Caco-2 (cell line): ENCODE measurements at regions of chr2 and their contacts with region 1.

Region 1: DNA sequence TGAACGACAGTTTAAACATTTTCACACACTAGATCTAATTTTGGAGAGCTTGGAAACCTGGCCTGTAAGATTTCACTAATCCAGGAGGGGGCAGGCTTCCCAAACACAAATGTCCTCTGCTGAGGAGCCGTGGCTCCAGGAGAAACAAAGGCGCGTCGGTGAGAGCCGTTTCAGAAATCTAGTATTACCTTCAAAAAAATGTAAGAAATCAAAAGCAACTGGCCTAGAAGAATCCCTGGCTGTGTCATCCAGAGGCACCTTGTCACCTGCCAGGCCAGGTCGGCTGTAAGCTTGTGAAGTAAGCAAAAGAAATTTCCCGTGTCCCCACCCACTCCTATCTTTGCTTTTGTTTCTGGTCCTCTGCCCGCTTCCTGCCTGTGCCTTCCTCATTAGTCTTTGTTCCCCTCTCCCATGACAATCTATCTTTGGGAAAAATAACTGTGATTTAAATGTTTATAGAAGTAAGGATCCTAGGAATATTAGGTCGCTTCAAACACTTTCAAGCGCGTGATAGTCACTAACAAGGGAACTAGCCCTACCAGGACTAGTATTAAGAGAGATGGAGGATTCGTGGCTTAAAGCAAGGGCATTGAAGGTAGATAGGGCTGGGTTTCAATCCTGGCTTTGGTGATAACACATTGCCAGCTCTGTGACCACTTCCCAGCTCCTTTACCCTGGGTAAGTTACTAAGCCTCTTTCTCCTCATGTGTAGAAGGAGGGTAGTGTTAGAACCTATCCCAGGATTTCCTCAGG is 99.5 kb upstream of the STK39 start:
- DNase-seq: peak; percentile 60 to 77
- H3K4me3 ChIP-seq: peak overlapping the region; percentile 38
- H3K4me3 Mint-ChIP-seq: peak overlapping the region; percentile 83
- H3K27ac Mint-ChIP-seq: peak overlapping the region; percentile 56
- H3K4me1 ChIP-seq: no peaks in the 10 kb centered on the region; the same call in 1 of the 2 replicates
- H3K4me1 Mint-ChIP-seq: peaks cover 10% of the 10 kb centered on the region
- H3K27me3 ChIP-seq: no peaks in the 10 kb centered on the region
- H3K27me3 Mint-ChIP-seq: no peaks in the 10 kb centered on the region
- CTCF ChIP-seq: peak; percentile 79 to 82

Region 2: GRCh38 chr2:168130346-168130745 is 216.6 kb before region 1 on chr2:
- CTCF ChIA-PET with region 1: no interaction called
- POLR2A ChIA-PET with region 1: no interaction called
- intact Hi-C with region 1: no loop called
- DNase-seq: no peak
- H3K4me3 ChIP-seq: no peak overlapping the region
- H3K4me3 Mint-ChIP-seq: no peak overlapping the region
- H3K27ac Mint-ChIP-seq: no peak overlapping the region
- H3K4me1 ChIP-seq: no peaks in the 10 kb centered on the region
- H3K4me1 Mint-ChIP-seq: no peaks in the 10 kb centered on the region
- H3K27me3 ChIP-seq: no peaks in the 10 kb centered on the region
- H3K27me3 Mint-ChIP-seq: peaks cover 5% of the 10 kb centered on the region
- CTCF ChIP-seq: no peak

Region 3: GRCh38 chr2:168194784-168195522 is 151.9 kb before region 1 on chr2:
- CTCF ChIA-PET with region 1: no interaction called
- POLR2A ChIA-PET with region 1: no interaction called
- intact Hi-C with region 1: no loop called
- DNase-seq: no peak
- H3K4me3 ChIP-seq: no peak overlapping the region
- H3K4me3 Mint-ChIP-seq: no peak overlapping the region
- H3K27ac Mint-ChIP-seq: no peak overlapping the region
- H3K4me1 ChIP-seq: peaks cover 31% of the 10 kb centered on the region
- H3K4me1 Mint-ChIP-seq: peaks cover 47% of the 10 kb centered on the region
- H3K27me3 ChIP-seq: no peaks in the 10 kb centered on the region
- H3K27me3 Mint-ChIP-seq: no peaks in the 10 kb centered on the region
- CTCF ChIP-seq: no peak

Region 4: GRCh38 chr2:168439536-168439935 is 92.6 kb after region 1 on chr2:
- CTCF ChIA-PET with region 1: no interaction called
- POLR2A ChIA-PET with region 1: no interaction called
- intact Hi-C with region 1: loop called (anchors 5 kb)
- DNase-seq: no peak
- H3K4me3 ChIP-seq: no peak overlapping the region
- H3K4me3 Mint-ChIP-seq: no peak overlapping the region
- H3K27ac Mint-ChIP-seq: no peak overlapping the region
- H3K4me1 ChIP-seq: no peaks in the 10 kb centered on the region
- H3K4me1 Mint-ChIP-seq: no peaks in the 10 kb centered on the region
- H3K27me3 ChIP-seq: no peaks in the 10 kb centered on the region
- H3K27me3 Mint-ChIP-seq: no peaks in the 10 kb centered on the region
- CTCF ChIP-seq: no peak

Region 5: GRCh38 chr2:168490015-168490874 is 143.3 kb after region 1 on chr2:
- CTCF ChIA-PET with region 1: no interaction called
- POLR2A ChIA-PET with region 1: no interaction called
- intact Hi-C with region 1: loop called (anchors 2 kb)
- DNase-seq: no peak
- H3K4me3 ChIP-seq: no peak overlapping the region
- H3K4me3 Mint-ChIP-seq: peak overlapping the region; percentile 12
- H3K27ac Mint-ChIP-seq: peak overlapping the region; percentile 56
- H3K4me1 ChIP-seq: peaks cover 52% of the 10 kb centered on the region
- H3K4me1 Mint-ChIP-seq: peaks cover 59% of the 10 kb centered on the region
- H3K27me3 ChIP-seq: no peaks in the 10 kb centered on the region
- H3K27me3 Mint-ChIP-seq: no peaks in the 10 kb centered on the region
- CTCF ChIP-seq: no peak

Region 6: GRCh38 chr2:168687314-168687713 is 340.4 kb after region 1 on chr2:
- CTCF ChIA-PET with region 1: interaction called, 5 read pairs
- POLR2A ChIA-PET with region 1: no interaction called
- intact Hi-C with region 1: loop called (anchors 1 kb)
- DNase-seq: no peak
- H3K4me3 ChIP-seq: no peak overlapping the region
- H3K4me3 Mint-ChIP-seq: no peak overlapping the region
- H3K27ac Mint-ChIP-seq: no peak overlapping the region
- H3K4me1 ChIP-seq: peaks cover 10% of the 10 kb centered on the region
- H3K4me1 Mint-ChIP-seq: peaks cover 11% of the 10 kb centered on the region
- H3K27me3 ChIP-seq: no peaks in the 10 kb centered on the region
- H3K27me3 Mint-ChIP-seq: no peaks in the 10 kb centered on the region
- CTCF ChIP-seq: peak in 1 of 2 experiments; percentile 29

Region 7: GRCh38 chr2:168705534-168706470 is 358.9 kb after region 1 on chr2:
- CTCF ChIA-PET with region 1: interaction called, 5 read pairs
- POLR2A ChIA-PET with region 1: no interaction called
- intact Hi-C with region 1: loop called (anchors 1 kb)
- DNase-seq: peak; percentile 64 to 79
- H3K4me3 ChIP-seq: no peak overlapping the region
- H3K4me3 Mint-ChIP-seq: peak overlapping the region; percentile 8
- H3K27ac Mint-ChIP-seq: peak overlapping the region; percentile 67
- H3K4me1 ChIP-seq: peaks cover 38% of the 10 kb centered on the region
- H3K4me1 Mint-ChIP-seq: peaks cover 18% of the 10 kb centered on the region
- H3K27me3 ChIP-seq: no peaks in the 10 kb centered on the region
- H3K27me3 Mint-ChIP-seq: no peaks in the 10 kb centered on the region
- CTCF ChIP-seq: peak; percentile 39 to 47

Region 8: GRCh38 chr2:168773719-168774521 is 427.0 kb after region 1 on chr2:
- CTCF ChIA-PET with region 1: no interaction called
- POLR2A ChIA-PET with region 1: no interaction called
- intact Hi-C with region 1: loop called (anchors 5 kb)
- DNase-seq: peak; percentile 62 to 80
- H3K4me3 ChIP-seq: no peak overlapping the region
- H3K4me3 Mint-ChIP-seq: no peak overlapping the region
- H3K27ac Mint-ChIP-seq: no peak overlapping the region
- H3K4me1 ChIP-seq: peaks cover 11% of the 10 kb centered on the region
- H3K4me1 Mint-ChIP-seq: no peaks in the 10 kb centered on the region
- H3K27me3 ChIP-seq: no peaks in the 10 kb centered on the region
- H3K27me3 Mint-ChIP-seq: no peaks in the 10 kb centered on the region
- CTCF ChIP-seq: peak; percentile 85 to 89

Region 9: GRCh38 chr2:168920504-168921157 is 573.7 kb after region 1 on chr2:
- CTCF ChIA-PET with region 1: no interaction called
- POLR2A ChIA-PET with region 1: no interaction called
- intact Hi-C with region 1: loop called (anchors 1 kb)
- DNase-seq: peak in 1 of 2 experiments; percentile 45
- H3K4me3 ChIP-seq: no peak overlapping the region
- H3K4me3 Mint-ChIP-seq: no peak overlapping the region
- H3K27ac Mint-ChIP-seq: no peak overlapping the region
- H3K4me1 ChIP-seq: no peaks in the 10 kb centered on the region
- H3K4me1 Mint-ChIP-seq: no peaks in the 10 kb centered on the region
- H3K27me3 ChIP-seq: peaks cover 2% of the 10 kb centered on the region; the same call in 1 of the 2 replicates
- H3K27me3 Mint-ChIP-seq: peaks cover 24% of the 10 kb centered on the region
- CTCF ChIP-seq: peak; percentile 42 to 51